BJ (cell line): ENCODE measurements at regions of chr17 and their contacts with region 1.

Region 1: DNA sequence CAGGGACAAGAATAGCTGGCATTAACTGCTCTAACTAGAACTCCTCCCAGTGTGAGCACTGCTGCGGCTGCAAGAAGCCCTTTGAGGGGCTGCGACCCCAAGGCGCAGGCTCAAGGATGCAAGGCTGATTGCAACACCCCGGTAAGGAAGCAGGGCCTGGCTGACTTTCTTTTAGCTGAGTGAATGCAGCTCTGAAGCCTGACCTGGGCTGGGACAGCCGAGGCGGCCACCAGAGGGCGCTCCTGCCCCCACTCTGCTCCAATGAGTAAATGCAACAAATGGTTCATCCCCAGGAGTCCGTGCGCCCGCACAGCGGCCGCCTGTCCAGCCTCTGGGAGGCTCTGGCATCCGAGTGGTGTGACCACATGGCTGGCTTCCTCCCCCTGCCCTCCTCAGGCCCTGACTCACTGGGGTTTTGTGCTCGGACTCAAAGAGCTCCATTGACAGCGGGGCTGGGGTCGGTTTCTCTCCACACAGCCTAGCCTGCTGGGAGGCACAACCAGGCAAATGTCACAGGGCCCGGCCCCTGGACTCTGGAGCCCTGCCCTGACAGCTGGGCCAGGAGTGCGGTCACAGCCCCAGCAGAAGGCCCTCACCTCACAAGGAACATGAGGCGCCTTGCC is at the start of gene SMIM5:
- DNase-seq: peak; percentile 45
- H3K4me3 ChIP-seq: no peak within 1 kb of the TSS
- H3K27me3 ChIP-seq: no peaks in the 10 kb centered on the region
- CTCF ChIP-seq: peak; percentile 96
- polyA plus RNA-seq, gene SMIM5: 0.10 TPM in 1 of 2 replicates, not detected in the other

Region 2: GRCh38 chr17:75059369-75060345 is 573.3 kb before region 1 on chr17:
- CTCF ChIA-PET with region 1: no interaction called
- POLR2A ChIA-PET with region 1: no interaction called
- DNase-seq: peak; percentile 65
- H3K4me3 ChIP-seq: no peak overlapping the region
- H3K27me3 ChIP-seq: no peaks in the 10 kb centered on the region
- CTCF ChIP-seq: peak; percentile 60

Region 3: GRCh38 chr17:75430159-75430974 is 202.6 kb before region 1 on chr17:
- CTCF ChIA-PET with region 1: interaction called, 12 read pairs
- POLR2A ChIA-PET with region 1: no interaction called
- DNase-seq: peak; percentile 68
- H3K4me3 ChIP-seq: peak overlapping the region; percentile 15
- H3K27me3 ChIP-seq: no peaks in the 10 kb centered on the region
- CTCF ChIP-seq: peak; percentile 19; the same call in 1 of the 2 replicates

Region 4: DNA sequence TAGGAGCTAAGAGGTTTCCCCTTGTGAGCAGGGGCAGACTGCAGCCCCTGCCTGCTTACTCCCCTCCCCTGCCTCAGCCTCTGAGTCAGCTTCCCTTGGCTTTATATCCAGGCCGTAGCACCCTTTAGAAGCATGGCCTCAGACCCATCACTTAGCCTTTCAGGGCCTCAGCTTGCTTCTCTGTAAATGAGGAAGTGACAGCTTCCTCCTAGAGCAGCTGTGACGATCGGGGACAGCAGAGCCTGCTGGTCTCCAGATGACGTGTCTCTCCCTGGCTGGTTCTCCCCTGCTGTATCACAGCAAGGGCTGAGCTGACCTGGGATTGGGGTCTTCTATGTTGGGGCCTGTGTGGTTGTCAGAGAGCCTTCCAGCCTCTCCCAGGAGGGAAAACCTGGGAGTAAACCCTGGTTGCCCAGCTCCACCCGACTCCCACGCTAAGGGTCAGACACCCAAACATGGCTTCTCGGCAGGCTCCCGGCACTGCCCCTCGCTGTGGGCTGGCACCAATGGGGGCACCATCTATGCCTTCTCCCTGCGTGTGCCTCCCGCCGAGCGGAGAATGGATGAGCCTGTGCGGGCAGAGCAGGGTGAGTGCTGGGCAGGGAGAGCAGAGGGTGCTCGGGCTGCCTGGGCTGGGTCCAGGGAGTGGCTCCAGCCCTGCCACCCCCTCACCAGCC is 61.6 kb before region 1 on chr17:
- CTCF ChIA-PET with region 1: no interaction called
- POLR2A ChIA-PET with region 1: no interaction called
- DNase-seq: no peak
- H3K4me3 ChIP-seq: no peak overlapping the region
- H3K27me3 ChIP-seq: peaks cover 5% of the 10 kb centered on the region; the same call in 1 of the 2 replicates
- CTCF ChIP-seq: no peak

Region 5: DNA sequence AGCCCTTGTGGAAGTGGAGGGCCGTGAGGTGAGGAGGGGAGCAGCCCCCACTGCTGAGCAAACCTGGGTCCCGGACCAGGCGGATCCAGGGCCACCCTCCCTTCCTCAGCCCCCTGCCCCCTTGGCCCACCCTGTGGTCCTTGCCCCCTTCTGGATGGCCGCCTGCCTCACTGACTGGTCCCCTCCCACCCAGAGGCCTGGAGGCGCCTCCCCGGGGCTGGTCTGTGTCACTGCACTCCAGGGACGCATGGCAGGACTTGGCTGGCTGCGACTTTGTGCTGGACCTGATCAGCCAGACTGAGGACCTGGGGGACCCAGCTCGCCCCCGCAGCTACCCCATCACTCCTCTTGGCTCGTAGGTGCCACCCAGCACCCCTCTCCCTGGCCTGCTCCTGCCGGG is 19.0 kb before region 1 on chr17:
- CTCF ChIA-PET with region 1: interaction called, 37 read pairs
- POLR2A ChIA-PET with region 1: no interaction called
- DNase-seq: no peak
- H3K4me3 ChIP-seq: no peak overlapping the region
- H3K27me3 ChIP-seq: no peaks in the 10 kb centered on the region
- CTCF ChIP-seq: no peak

Region 6: DNA sequence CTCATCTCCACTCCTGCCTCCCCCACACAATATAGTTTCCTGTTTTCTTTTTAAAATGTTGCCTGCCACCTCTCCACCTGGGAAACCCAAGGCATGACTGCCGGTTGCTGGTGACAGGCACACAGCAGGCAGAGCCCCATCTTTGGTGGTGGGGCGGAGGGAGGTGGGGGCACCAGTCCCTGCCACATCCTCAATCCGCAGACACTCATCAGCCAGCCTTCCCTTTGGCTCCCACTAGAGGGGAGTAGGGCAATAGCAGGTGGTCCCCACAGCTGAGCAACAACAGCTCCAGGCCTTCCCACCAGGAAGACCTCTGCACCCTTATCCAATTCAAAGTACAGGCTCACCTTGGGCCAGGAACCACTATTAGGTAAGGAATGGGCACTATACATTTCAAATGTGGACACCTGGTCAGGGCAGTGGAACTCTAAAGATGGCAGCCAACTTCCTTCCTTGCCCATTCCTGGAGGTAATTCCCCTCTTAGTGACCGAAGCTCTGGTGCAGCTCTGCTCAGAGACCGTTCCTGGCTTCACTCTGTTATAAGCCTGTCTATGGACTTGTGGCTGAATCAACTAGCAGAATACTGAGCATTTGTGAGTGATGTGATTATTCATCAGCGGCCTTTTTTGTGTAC is 20.1 kb after region 1 on chr17:
- CTCF ChIA-PET with region 1: interaction called, 149 read pairs
- POLR2A ChIA-PET with region 1: no interaction called
- DNase-seq: no peak
- H3K4me3 ChIP-seq: no peak overlapping the region
- H3K27me3 ChIP-seq: no peaks in the 10 kb centered on the region
- CTCF ChIP-seq: peak; percentile 87

Region 7: GRCh38 chr17:75679706-75680442 is 46.9 kb after region 1 on chr17:
- CTCF ChIA-PET with region 1: interaction called, 14 read pairs
- POLR2A ChIA-PET with region 1: no interaction called
- DNase-seq: peak; percentile 51
- H3K4me3 ChIP-seq: no peak overlapping the region
- H3K27me3 ChIP-seq: no peaks in the 10 kb centered on the region
- CTCF ChIP-seq: peak; percentile 34; the same call in 1 of the 2 replicates

Region 8: GRCh38 chr17:75758117-75758926 is 125.3 kb after region 1 on chr17:
- CTCF ChIA-PET with region 1: interaction called, 502 read pairs
- POLR2A ChIA-PET with region 1: no interaction called
- DNase-seq: no peak
- H3K4me3 ChIP-seq: no peak overlapping the region
- H3K27me3 ChIP-seq: no peaks in the 10 kb centered on the region
- CTCF ChIP-seq: peak; percentile 29; the same call in 1 of the 2 replicates